H1 (cell line): ENCODE measurements at regions of chr16 and their contacts with region 1.

Region 1: DNA sequence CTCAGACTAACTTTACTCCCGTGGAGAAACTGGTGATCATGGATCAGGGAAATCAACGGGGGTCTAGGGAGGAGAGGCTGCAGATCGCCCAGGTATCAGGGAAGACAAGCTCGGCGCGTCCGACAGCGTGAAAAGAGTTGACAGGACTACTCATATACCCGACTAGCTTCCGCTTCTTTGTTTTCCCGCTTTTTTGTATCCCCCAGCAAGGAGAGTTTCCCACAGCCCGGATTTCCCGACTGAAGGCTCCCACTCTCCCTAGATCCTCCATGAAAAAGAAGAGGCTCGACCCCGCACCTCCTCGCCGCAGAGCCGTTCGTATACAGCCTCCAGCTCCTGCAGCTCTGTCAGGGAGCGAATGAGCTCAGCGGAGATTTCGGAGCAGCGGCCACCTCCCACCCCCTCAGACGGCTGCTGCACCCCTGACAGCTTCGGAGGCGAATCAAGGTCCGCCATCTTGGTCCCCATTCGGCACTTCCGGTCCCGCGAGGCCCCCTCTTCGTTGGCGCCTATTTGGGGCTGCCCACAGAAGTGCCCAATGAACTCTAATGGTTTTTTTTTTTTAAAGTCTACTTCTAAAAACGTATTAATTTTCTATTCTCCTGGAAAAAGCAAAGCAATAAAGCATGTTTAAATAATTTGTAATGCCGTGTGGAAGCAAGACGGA is at the start of gene COG4:
- DNase-seq: peak; percentile 59 to 88
- H3K4me3 ChIP-seq: peak within 1 kb of the TSS; percentile 88 to 96 (median 91)
- H3K27ac ChIP-seq: peak within 1 kb of the TSS; percentile 91
- H3K4me1 ChIP-seq: peaks cover 0 to 4% (median 3%) of the 10 kb centered on the region in 4 experiments; a peak in 5 of 7 replicates
- H3K27me3 ChIP-seq: no peaks in the 10 kb centered on the region
- CTCF ChIP-seq: no peak
- EP300 ChIP-seq: no peak
- POLR2A ChIP-seq: peak in 1 of 2 experiments; percentile 36; a peak in 2 of 3 replicates
- RAD21 ChIP-seq: no peak
- total RNA-seq, gene COG4: 46.1 and 52.2 TPM in 2 replicates

Region 2: GRCh38 chr16:70512456-70512855 is 10.8 kb before region 1 on chr16:
- CTCF ChIA-PET with region 1: no interaction called
- POLR2A ChIA-PET with region 1: interaction called, 27 read pairs
- DNase-seq: no peak
- H3K4me3 ChIP-seq: no peak overlapping the region
- H3K27ac ChIP-seq: no peak overlapping the region
- H3K4me1 ChIP-seq: no peaks in the 10 kb centered on the region
- H3K27me3 ChIP-seq: no peaks in the 10 kb centered on the region
- CTCF ChIP-seq: no peak
- EP300 ChIP-seq: no peak
- POLR2A ChIP-seq: no peak
- RAD21 ChIP-seq: no peak

Region 3: GRCh38 chr16:70534971-70535370 is 11.8 kb after region 1 on chr16:
- CTCF ChIA-PET with region 1: no interaction called
- POLR2A ChIA-PET with region 1: interaction called, 17 read pairs
- DNase-seq: no peak
- H3K4me3 ChIP-seq: no peak overlapping the region
- H3K27ac ChIP-seq: no peak overlapping the region
- H3K4me1 ChIP-seq: no peaks in the 10 kb centered on the region
- H3K27me3 ChIP-seq: no peaks in the 10 kb centered on the region
- CTCF ChIP-seq: no peak
- EP300 ChIP-seq: no peak
- POLR2A ChIP-seq: no peak
- RAD21 ChIP-seq: no peak

Region 4: GRCh38 chr16:70540994-70541393 is 17.8 kb after region 1 on chr16:
- CTCF ChIA-PET with region 1: interaction called, 4 read pairs
- POLR2A ChIA-PET with region 1: interaction called, 17 read pairs
- DNase-seq: no peak
- H3K4me3 ChIP-seq: no peak overlapping the region
- H3K27ac ChIP-seq: no peak overlapping the region
- H3K4me1 ChIP-seq: no peaks in the 10 kb centered on the region
- H3K27me3 ChIP-seq: no peaks in the 10 kb centered on the region
- CTCF ChIP-seq: no peak
- EP300 ChIP-seq: no peak
- POLR2A ChIP-seq: no peak
- RAD21 ChIP-seq: no peak

Region 5: DNA sequence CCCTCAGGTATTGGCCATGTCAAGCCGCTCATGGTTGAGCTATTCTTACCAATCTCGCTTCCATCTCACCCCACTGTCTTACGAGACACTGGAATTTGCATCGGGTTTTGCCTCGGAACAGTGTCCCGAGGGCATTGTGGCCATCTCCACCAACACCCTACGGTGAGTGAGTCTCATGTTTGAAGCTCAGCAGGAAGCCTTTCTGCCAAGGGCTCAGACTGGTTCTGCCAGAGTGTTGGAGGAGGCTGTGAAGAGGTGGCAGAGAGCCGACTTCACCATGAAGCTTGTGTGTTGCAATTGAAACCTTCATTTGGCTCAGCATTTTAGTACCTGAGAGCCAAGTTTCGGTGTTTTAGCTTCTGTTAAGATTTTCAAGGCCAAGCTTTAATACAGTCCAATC is 38.4 kb after region 1 on chr16:
- CTCF ChIA-PET with region 1: interaction called, 3 read pairs
- POLR2A ChIA-PET with region 1: interaction called, 525 read pairs
- DNase-seq: no peak
- H3K4me3 ChIP-seq: no peak overlapping the region
- H3K27ac ChIP-seq: no peak overlapping the region
- H3K4me1 ChIP-seq: no peaks in the 10 kb centered on the region
- H3K27me3 ChIP-seq: no peaks in the 10 kb centered on the region
- CTCF ChIP-seq: no peak
- EP300 ChIP-seq: no peak
- POLR2A ChIP-seq: no peak
- RAD21 ChIP-seq: no peak

Region 6: GRCh38 chr16:70568601-70569237 is 45.5 kb after region 1 on chr16:
- CTCF ChIA-PET with region 1: no interaction called
- POLR2A ChIA-PET with region 1: interaction called, 525 read pairs
- DNase-seq: no peak
- H3K4me3 ChIP-seq: no peak overlapping the region
- H3K27ac ChIP-seq: no peak overlapping the region
- H3K4me1 ChIP-seq: no peaks in the 10 kb centered on the region
- H3K27me3 ChIP-seq: no peaks in the 10 kb centered on the region
- CTCF ChIP-seq: no peak
- EP300 ChIP-seq: no peak
- POLR2A ChIP-seq: no peak
- RAD21 ChIP-seq: no peak